Left cardiac atrium (tissue), 4 donors: ENCODE measurements at regions of chr13 and their contacts with region 1.

Region 1: GRCh38 chr13:67224148-67224846 is 5.8 kb downstream of the PCDH9 start:
- DNase-seq: peak; percentile 75
- ATAC-seq: peak; percentile 81 to 86

Region 2: GRCh38 chr13:65913173-65913572 is 1311.1 kb before region 1 on chr13:
- intact Hi-C with region 1: loop called in 1 of 2 experiments (anchors 10 kb)
- DNase-seq: no peak
- ATAC-seq: peak in 1 of 2 donors; percentile 92

Region 3: GRCh38 chr13:66624302-66624701 is 600.0 kb before region 1 on chr13:
- intact Hi-C with region 1: loop called in 1 of 2 experiments (anchors 10 kb)
- DNase-seq: no peak
- ATAC-seq: peak; percentile 59 to 72

Region 4: DNA sequence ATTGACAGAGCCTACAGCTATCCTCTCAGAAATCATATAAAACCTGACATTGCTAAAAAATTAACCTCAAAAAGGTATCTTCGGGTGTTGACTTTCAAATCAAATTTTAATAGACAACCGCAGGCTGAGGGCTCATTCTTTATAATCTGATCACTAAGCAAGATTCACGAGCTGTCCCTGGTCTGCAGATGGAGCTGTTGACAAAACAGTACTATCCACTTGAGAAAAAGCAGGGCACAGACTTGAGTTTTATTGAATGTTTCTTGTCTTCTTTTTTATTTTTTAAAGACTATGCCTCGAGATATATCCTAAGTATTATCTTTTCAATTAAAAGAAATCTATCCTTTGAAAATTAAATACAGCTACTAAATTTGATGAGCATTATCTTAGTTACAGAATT is 534.7 kb before region 1 on chr13:
- intact Hi-C with region 1: loop called in 1 of 2 experiments (anchors 10 kb)
- DNase-seq: no peak
- ATAC-seq: peak in 1 of 2 donors; percentile 41

Region 5: DNA sequence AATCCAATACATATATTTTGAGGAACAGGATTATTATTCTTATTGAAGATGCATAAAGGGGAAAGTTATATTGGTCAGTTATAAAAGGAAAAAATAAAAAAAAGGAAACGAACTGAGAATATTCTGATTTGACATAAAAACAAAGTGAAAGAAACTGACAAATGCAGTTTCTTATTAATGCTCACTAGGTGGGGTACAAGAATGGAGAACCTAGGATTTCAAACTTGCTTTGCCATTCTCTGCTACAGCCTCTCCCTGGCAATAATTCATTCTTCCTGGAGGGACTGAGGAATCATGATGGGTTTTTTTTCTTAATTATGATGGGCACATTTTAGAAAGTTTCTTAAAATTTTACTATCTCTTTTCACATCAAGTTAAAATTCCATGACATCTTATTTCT is 149.1 kb before region 1 on chr13:
- intact Hi-C with region 1: loop called (anchors 2 to 10 kb)
- DNase-seq: no peak
- ATAC-seq: peak; percentile 38 to 68